ENCODE measurements at regions of chr4 and their contacts with region 1.

Region 1: DNA sequence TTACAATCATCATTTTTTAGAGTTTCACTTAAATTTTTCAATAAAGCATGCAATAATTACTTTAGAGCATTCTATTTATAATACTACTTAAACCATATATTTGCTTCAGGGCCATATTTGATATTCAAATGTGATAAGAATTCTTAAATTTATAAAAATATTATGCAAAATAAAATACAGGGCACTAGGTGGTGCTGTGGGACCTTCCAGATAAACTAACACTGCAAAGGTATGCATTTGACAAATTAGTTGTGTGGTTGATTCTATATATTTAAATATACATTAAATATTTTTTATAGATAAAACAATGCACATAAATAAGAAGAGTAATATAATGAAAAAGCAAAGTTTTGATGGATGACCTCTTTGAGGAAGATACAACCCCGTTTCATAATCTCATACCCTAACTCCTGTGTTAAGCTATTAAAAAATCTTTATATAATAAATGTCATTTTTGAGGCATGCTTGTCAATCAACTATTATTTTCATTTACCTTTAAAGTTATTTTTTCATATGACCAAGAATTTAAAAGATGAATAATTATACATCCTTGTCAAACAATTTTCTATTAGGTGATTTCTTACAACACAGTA is 128.4 kb downstream of the REELD1 start:
- DNase-seq: no peak
- H3K4me3 ChIP-seq: no peak overlapping the region
- H3K27ac ChIP-seq: no peak overlapping the region
- H3K4me1 ChIP-seq: no peaks in the 10 kb centered on the region
- H3K27me3 ChIP-seq: no peaks in the 10 kb centered on the region
- CTCF ChIP-seq: peak; percentile 37 to 54

Region 2: GRCh38 chr4:146243141-146243882 is 99.4 kb before region 1 on chr4:
- CTCF ChIA-PET with region 1: interaction called, 4 read pairs
- dilution Hi-C with region 1: no loop called
- in situ Hi-C with region 1: no loop called
- intact Hi-C with region 1: loop called (anchors 1 kb)
- DNase-seq: no peak
- H3K4me3 ChIP-seq: no peak overlapping the region
- H3K27ac ChIP-seq: no peak overlapping the region
- H3K4me1 ChIP-seq: peaks cover 25% of the 10 kb centered on the region
- H3K27me3 ChIP-seq: no peaks in the 10 kb centered on the region
- CTCF ChIP-seq: peak; percentile 29 to 55

Region 3: GRCh38 chr4:146522098-146522868 is 179.6 kb after region 1 on chr4:
- CTCF ChIA-PET with region 1: no interaction called
- dilution Hi-C with region 1: no loop called
- in situ Hi-C with region 1: no loop called
- intact Hi-C with region 1: loop called (anchors 2 kb)
- DNase-seq: peak; percentile 77
- H3K4me3 ChIP-seq: peak overlapping the region; percentile 94 to 99 (median 98)
- H3K27ac ChIP-seq: peak overlapping the region; percentile 89
- H3K4me1 ChIP-seq: peaks cover 10% of the 10 kb centered on the region
- H3K27me3 ChIP-seq: no peaks in the 10 kb centered on the region
- CTCF ChIP-seq: no peak

Region 4: GRCh38 chr4:146638801-146639605 is 296.3 kb after region 1 on chr4 and contains the start of gene POU4F2:
- CTCF ChIA-PET with region 1: no interaction called
- dilution Hi-C with region 1: no loop called
- in situ Hi-C with region 1: no loop called
- intact Hi-C with region 1: loop called (anchors 10 kb)
- DNase-seq: no peak
- H3K4me3 ChIP-seq: no peak within 1 kb of the TSS
- H3K27ac ChIP-seq: no peak within 1 kb of the TSS
- H3K4me1 ChIP-seq: peaks cover 3% of the 10 kb centered on the region
- H3K27me3 ChIP-seq: peaks cover 61% of the 10 kb centered on the region
- CTCF ChIP-seq: no peak
- total RNA-seq, gene POU4F2: not detected

Region 5: GRCh38 chr4:146899722-146900121 is 557.0 kb after region 1 on chr4:
- CTCF ChIA-PET with region 1: no interaction called
- dilution Hi-C with region 1: no loop called
- in situ Hi-C with region 1: no loop called
- intact Hi-C with region 1: loop called (anchors 5 kb)
- DNase-seq: no peak
- H3K4me3 ChIP-seq: no peak overlapping the region
- H3K27ac ChIP-seq: no peak overlapping the region
- H3K4me1 ChIP-seq: no peaks in the 10 kb centered on the region
- H3K27me3 ChIP-seq: peaks cover 4% of the 10 kb centered on the region
- CTCF ChIP-seq: no peak